ENCODE measurements at regions of chr1 and their contacts with region 1.

Region 1: GRCh38 chr1:205977402-205978014 is 25.7 kb downstream of the RAB7B start:
- DNase-seq: peak; percentile 51 to 85
- H3K4me3 ChIP-seq: no peak overlapping the region
- H3K27ac ChIP-seq: no peak overlapping the region
- H3K4me1 ChIP-seq: no peaks in the 10 kb centered on the region; a peak in 2 of 7 replicates
- H3K27me3 ChIP-seq: no peaks in the 10 kb centered on the region; a peak in 1 of 7 replicates
- CTCF ChIP-seq: peak; percentile 93 to 98 (median 97)
- EP300 ChIP-seq: no peak
- POLR2A ChIP-seq: no peak
- RAD21 ChIP-seq: peak; percentile 99 to 100

Region 2: GRCh38 chr1:205658943-205659581 is 318.4 kb before region 1 on chr1:
- CTCF ChIA-PET with region 1: interaction called, 21 read pairs
- POLR2A ChIA-PET with region 1: no interaction called
- DNase-seq: peak in 1 of 2 experiments; percentile 94
- H3K4me3 ChIP-seq: no peak overlapping the region
- H3K27ac ChIP-seq: no peak overlapping the region
- H3K4me1 ChIP-seq: peaks cover 0 to 10% (median 5%) of the 10 kb centered on the region in 4 experiments; a peak in 5 of 7 replicates
- H3K27me3 ChIP-seq: no peaks in the 10 kb centered on the region; a peak in 1 of 7 replicates
- CTCF ChIP-seq: peak; percentile 91 to 97 (median 94)
- EP300 ChIP-seq: no peak
- POLR2A ChIP-seq: no peak
- RAD21 ChIP-seq: peak; percentile 96 to 99

Region 3: GRCh38 chr1:205805082-205805712 is 172.3 kb before region 1 on chr1:
- CTCF ChIA-PET with region 1: interaction called, 13 read pairs
- POLR2A ChIA-PET with region 1: no interaction called
- DNase-seq: no peak
- H3K4me3 ChIP-seq: no peak overlapping the region
- H3K27ac ChIP-seq: no peak overlapping the region
- H3K4me1 ChIP-seq: peaks cover 0 to 5% (median 0%) of the 10 kb centered on the region in 4 experiments; a peak in 3 of 7 replicates
- H3K27me3 ChIP-seq: no peaks in the 10 kb centered on the region
- CTCF ChIP-seq: no peak
- EP300 ChIP-seq: no peak
- POLR2A ChIP-seq: no peak
- RAD21 ChIP-seq: no peak

Region 4: GRCh38 chr1:205896320-205896719 is 81.2 kb before region 1 on chr1:
- CTCF ChIA-PET with region 1: interaction called, 12 read pairs
- POLR2A ChIA-PET with region 1: no interaction called
- DNase-seq: no peak
- H3K4me3 ChIP-seq: no peak overlapping the region
- H3K27ac ChIP-seq: no peak overlapping the region
- H3K4me1 ChIP-seq: no peaks in the 10 kb centered on the region; a peak in 1 of 7 replicates
- H3K27me3 ChIP-seq: no peaks in the 10 kb centered on the region
- CTCF ChIP-seq: no peak
- EP300 ChIP-seq: no peak
- POLR2A ChIP-seq: no peak
- RAD21 ChIP-seq: no peak

Region 5: DNA sequence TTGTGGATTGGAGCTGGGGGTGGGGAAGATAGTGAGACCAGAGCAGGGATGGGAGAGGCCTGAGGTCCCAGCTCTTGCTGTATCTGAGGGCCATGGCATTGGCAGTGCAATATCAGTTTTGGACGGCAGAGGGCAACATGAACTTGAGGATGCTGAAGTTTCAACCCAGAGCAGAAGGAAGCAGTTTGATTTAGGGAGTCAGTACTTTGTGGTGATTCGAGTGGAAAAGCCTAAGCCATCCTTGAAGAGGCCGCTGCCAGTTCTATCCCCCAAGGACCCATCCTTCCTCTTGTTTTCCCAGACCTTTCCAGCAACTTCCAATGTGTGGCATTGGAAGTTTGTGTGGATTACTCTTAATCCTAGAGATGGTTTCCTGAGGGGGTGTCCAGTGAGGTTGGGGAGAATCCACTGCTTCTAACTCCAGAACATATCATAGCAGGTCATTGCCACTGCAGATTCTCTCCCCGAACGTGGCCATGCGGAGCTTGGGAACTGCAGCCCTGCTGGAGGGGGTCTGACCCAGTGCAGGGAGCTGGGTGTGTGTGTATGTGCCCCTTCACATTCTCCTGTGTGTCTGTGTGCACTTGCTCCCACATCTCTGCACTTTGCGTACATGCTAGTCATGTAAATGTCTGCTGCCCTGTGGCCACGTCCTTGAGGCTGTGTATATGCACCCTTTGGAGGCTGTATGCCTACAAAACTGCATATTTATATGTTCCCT is 58.3 kb before region 1 on chr1:
- CTCF ChIA-PET with region 1: interaction called, 394 read pairs
- POLR2A ChIA-PET with region 1: interaction called, 8 read pairs
- DNase-seq: peak; percentile 70 to 92
- H3K4me3 ChIP-seq: no peak overlapping the region
- H3K27ac ChIP-seq: no peak overlapping the region
- H3K4me1 ChIP-seq: peaks cover 0 to 6% (median 2%) of the 10 kb centered on the region in 4 experiments; a peak in 4 of 7 replicates
- H3K27me3 ChIP-seq: no peaks in the 10 kb centered on the region; a peak in 1 of 7 replicates
- CTCF ChIP-seq: peak; percentile 84 to 99 (median 96)
- EP300 ChIP-seq: no peak
- POLR2A ChIP-seq: no peak
- RAD21 ChIP-seq: peak; percentile 98 to 99

Region 6: GRCh38 chr1:205961405-205961804 is 16.1 kb before region 1 on chr1:
- CTCF ChIA-PET with region 1: interaction called, 50 read pairs
- POLR2A ChIA-PET with region 1: no interaction called
- DNase-seq: no peak
- H3K4me3 ChIP-seq: no peak overlapping the region
- H3K27ac ChIP-seq: no peak overlapping the region
- H3K4me1 ChIP-seq: peaks cover 0 to 9% (median 4%) of the 10 kb centered on the region in 4 experiments; a peak in 4 of 7 replicates
- H3K27me3 ChIP-seq: no peaks in the 10 kb centered on the region
- CTCF ChIP-seq: no peak
- EP300 ChIP-seq: no peak
- POLR2A ChIP-seq: no peak
- RAD21 ChIP-seq: no peak

Region 7: DNA sequence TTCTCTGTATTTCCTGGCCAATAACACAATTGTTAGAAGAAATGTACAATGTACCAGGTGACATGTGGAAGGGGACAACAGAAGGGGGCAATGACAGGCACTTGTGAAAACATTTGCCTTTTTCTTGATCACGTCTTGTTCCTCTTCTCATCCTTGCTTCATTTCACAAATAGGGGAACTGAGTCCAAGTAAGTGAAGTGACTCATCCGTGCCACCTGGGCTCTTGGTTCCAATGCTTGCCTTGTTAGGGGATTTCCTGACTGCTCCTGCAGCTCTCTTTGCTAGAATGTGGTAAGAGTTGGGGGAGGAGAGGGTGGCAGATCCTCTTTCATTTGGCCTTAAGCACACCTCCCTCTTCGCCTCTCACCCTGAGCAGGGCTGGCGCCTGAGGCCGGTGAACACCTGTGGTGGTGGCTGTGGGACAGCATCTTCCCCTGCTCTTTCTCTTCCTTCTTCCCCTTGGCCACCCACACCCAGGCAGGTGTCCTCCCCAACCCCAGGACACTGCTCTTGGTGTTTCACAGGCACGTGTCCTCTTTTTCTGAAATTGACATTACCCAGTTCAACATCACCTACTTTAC is 73.2 kb after region 1 on chr1:
- CTCF ChIA-PET with region 1: interaction called, 10 read pairs
- POLR2A ChIA-PET with region 1: no interaction called
- DNase-seq: no peak
- H3K4me3 ChIP-seq: no peak overlapping the region
- H3K27ac ChIP-seq: no peak overlapping the region
- H3K4me1 ChIP-seq: no peaks in the 10 kb centered on the region; a peak in 1 of 7 replicates
- H3K27me3 ChIP-seq: no peaks in the 10 kb centered on the region
- CTCF ChIP-seq: no peak
- EP300 ChIP-seq: no peak
- POLR2A ChIP-seq: no peak
- RAD21 ChIP-seq: no peak

Measured in H1 (cell line).